ENCODE measurements at regions of chr1 and their contacts with region 1.

Region 1: DNA sequence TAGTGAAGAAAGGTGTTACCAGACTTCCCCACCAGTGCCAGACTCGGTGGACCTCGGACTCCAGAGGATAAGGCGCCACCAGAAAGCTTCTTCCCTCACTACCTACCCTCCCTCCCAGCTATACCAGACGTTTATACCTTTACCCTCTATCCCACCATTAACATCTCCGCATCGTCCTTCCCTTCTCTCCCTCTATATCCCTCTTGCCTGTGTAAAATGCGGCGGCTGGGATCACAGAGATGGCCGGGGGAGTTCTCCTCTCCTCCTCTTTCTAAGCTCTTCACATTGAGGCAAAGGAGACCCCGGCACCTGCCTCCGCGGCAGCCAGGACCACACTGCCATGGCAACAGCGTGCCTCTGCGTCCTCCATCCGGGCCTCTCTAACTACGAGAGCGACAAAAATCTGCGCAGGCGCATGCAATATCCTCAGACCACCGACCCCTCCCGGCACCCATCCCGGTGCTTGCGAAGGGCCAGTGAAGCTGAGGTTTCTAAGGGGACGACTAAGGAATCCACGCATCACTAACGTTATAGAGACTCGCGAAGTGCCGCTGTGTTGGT is at the start of gene CCDC181:
- DNase-seq: peak; percentile 34
- CTCF ChIP-seq: no peak

Region 2: DNA sequence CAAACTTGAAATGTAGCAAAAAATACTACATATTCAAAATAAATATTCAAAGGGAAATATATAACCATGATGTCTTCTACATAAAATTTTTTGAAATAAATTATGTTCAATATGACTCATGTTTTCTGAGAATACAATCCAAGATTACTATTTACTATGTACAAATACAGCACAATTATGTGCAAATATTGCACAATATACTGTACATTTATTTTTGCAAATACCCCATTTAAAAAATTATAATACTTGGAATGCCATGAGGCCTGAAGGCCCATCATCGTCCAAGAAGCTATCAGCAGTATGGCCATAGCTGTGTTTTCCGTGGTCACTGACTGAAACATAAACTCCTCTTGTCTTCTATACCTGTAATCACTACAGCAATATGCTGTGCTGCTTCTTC is 12.2 kb before region 1 on chr1:
- CTCF ChIA-PET with region 1: interaction called, 11 read pairs
- POLR2A ChIA-PET with region 1: no interaction called
- DNase-seq: no peak
- CTCF ChIP-seq: no peak

Region 3: GRCh38 chr1:169466259-169467230 is 39.4 kb after region 1 on chr1:
- CTCF ChIA-PET with region 1: no interaction called
- POLR2A ChIA-PET with region 1: no interaction called
- DNase-seq: peak; percentile 20
- CTCF ChIP-seq: peak; percentile 30